ENCODE measurements at regions of chr9 and their contacts with region 1.

Region 1: GRCh38 chr9:72443855-72444254 is 77.6 kb upstream of the TMC1 start:
- DNase-seq: peak; percentile 67
- ATAC-seq: peak; percentile 81
- H3K4me3 ChIP-seq: no peak overlapping the region
- H3K4me3 Mint-ChIP-seq: peak overlapping the region; percentile 20
- H3K27ac ChIP-seq: peak overlapping the region; percentile 5 to 19
- H3K27ac Mint-ChIP-seq: peak overlapping the region; percentile 77
- H3K4me1 ChIP-seq: peaks cover 26 to 33% of the 10 kb centered on the region in 2 donors
- H3K4me1 Mint-ChIP-seq: peaks cover 31% of the 10 kb centered on the region
- H3K27me3 ChIP-seq: no peaks in the 10 kb centered on the region
- H3K27me3 Mint-ChIP-seq: no peaks in the 10 kb centered on the region
- CTCF ChIP-seq: peak; percentile 31

Region 2: GRCh38 chr9:72305102-72305546 is 138.7 kb before region 1 on chr9:
- CTCF ChIA-PET with region 1: no interaction called
- POLR2A ChIA-PET with region 1: no interaction called
- intact Hi-C with region 1: loop called (anchors 5 kb)
- DNase-seq: peak; percentile 78
- ATAC-seq: peak; percentile 85
- H3K4me3 ChIP-seq: peak overlapping the region; percentile 36 to 77 (median 48)
- H3K4me3 Mint-ChIP-seq: peak overlapping the region; percentile 90
- H3K27ac ChIP-seq: peak overlapping the region; percentile 88 to 94
- H3K27ac Mint-ChIP-seq: peak overlapping the region; percentile 94
- H3K4me1 ChIP-seq: peaks cover 55 to 68% of the 10 kb centered on the region in 2 donors
- H3K4me1 Mint-ChIP-seq: peaks cover 59% of the 10 kb centered on the region
- H3K27me3 ChIP-seq: no peaks in the 10 kb centered on the region
- H3K27me3 Mint-ChIP-seq: no peaks in the 10 kb centered on the region
- CTCF ChIP-seq: no peak

Region 3: GRCh38 chr9:72383978-72384709 is 59.7 kb before region 1 on chr9:
- CTCF ChIA-PET with region 1: no interaction called
- POLR2A ChIA-PET with region 1: no interaction called
- intact Hi-C with region 1: no loop called
- DNase-seq: no peak
- ATAC-seq: no peak
- H3K4me3 ChIP-seq: no peak overlapping the region
- H3K4me3 Mint-ChIP-seq: no peak overlapping the region
- H3K27ac ChIP-seq: no peak overlapping the region
- H3K27ac Mint-ChIP-seq: no peak overlapping the region
- H3K4me1 ChIP-seq: no peaks in the 10 kb centered on the region
- H3K4me1 Mint-ChIP-seq: peaks cover 4% of the 10 kb centered on the region
- H3K27me3 ChIP-seq: no peaks in the 10 kb centered on the region
- H3K27me3 Mint-ChIP-seq: peaks cover 3% of the 10 kb centered on the region
- CTCF ChIP-seq: no peak

Region 4: DNA sequence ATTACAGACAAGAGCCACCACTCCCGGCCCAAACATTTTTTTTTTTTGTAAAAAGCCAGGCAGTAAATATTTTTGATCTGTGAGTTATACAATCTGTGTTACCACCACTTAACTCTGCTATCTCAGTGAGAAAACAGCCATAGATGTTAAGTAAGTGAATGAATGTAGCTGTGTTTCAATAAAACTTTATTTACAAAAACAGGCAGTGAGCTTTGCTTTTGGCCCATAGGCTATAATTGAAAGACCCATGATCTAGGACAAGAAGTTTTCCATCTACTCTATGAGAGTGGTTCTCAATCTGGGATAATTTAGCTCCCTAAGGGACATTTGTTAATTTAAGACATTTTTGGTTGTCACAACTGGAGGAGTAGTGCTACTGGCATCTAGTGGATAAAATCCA is 168.6 kb after region 1 on chr9:
- CTCF ChIA-PET with region 1: no interaction called
- POLR2A ChIA-PET with region 1: no interaction called
- intact Hi-C with region 1: no loop called
- DNase-seq: no peak
- ATAC-seq: no peak
- H3K4me3 ChIP-seq: no peak overlapping the region
- H3K4me3 Mint-ChIP-seq: no peak overlapping the region
- H3K27ac ChIP-seq: no peak overlapping the region
- H3K27ac Mint-ChIP-seq: no peak overlapping the region
- H3K4me1 ChIP-seq: no peaks in the 10 kb centered on the region
- H3K4me1 Mint-ChIP-seq: no peaks in the 10 kb centered on the region
- H3K27me3 ChIP-seq: peaks cover 0 to 2% (median 0%) of the 10 kb centered on the region in 4 experiments
- H3K27me3 Mint-ChIP-seq: peaks cover 8% of the 10 kb centered on the region
- CTCF ChIP-seq: no peak